ENCODE measurements at regions of chr14 and their contacts with region 1.

Region 1: DNA sequence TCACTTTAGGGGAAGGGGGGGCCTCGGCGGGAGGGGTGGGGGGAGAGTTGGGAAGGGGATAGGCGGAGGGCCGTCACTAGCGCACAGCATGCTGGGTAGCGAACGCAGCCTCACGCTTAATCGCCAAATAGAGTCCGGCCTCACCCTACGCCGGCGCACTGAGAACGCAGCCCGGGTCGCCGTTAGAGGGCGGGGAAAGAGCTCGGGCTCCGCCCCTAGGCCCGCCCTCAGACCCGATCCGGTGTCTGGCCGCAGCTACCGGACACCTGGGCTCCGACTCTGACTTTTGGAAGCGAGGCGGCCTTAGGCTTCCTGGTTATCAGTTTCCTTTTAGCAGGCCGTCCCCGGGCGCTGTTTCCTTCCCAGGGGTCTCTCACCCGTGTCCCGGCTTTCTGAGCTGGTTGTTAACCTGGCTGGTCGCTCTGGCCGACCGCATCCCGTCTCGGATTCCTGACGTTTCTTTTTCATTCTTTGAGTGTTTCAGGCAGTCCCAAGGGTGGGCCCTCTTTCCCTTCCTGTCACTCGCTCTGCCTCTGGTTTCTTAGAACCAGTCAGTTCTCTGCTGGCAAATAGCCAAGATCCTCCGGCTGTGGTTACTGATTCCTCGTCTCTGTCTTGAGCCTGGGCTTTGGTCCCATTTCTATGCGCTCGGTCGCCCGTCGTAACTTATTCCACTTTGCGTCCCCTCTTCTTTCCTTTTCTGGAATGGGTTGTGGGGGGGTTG is 378 bp upstream of the STRN3 start:
- DNase-seq: peak; percentile 97
- ATAC-seq: peak; percentile 96
- H3K4me3 ChIP-seq: peak overlapping the region; percentile 97
- H3K27ac ChIP-seq: peak overlapping the region; percentile 99
- H3K4me1 ChIP-seq: no peaks in the 10 kb centered on the region
- H3K27me3 ChIP-seq: no peaks in the 10 kb centered on the region
- CTCF ChIP-seq: no peak
- POLR2A ChIP-seq: peak; percentile 67
- RAD21 ChIP-seq: peak; percentile 10; the same call in 1 of the 2 replicates

Region 2: GRCh38 chr14:31059152-31059924 is 32.8 kb after region 1 on chr14:
- CTCF ChIA-PET with region 1: no interaction called
- POLR2A ChIA-PET with region 1: interaction called, 10 read pairs
- dilution Hi-C with region 1: no loop called
- in situ Hi-C with region 1: no loop called
- intact Hi-C with region 1: loop called (anchors 2 kb)
- DNase-seq: peak; percentile 87
- ATAC-seq: peak; percentile 93
- H3K4me3 ChIP-seq: no peak overlapping the region
- H3K27ac ChIP-seq: no peak overlapping the region
- H3K4me1 ChIP-seq: peaks cover 6% of the 10 kb centered on the region
- H3K27me3 ChIP-seq: no peaks in the 10 kb centered on the region
- CTCF ChIP-seq: no peak
- POLR2A ChIP-seq: no peak
- RAD21 ChIP-seq: no peak

Region 3: DNA sequence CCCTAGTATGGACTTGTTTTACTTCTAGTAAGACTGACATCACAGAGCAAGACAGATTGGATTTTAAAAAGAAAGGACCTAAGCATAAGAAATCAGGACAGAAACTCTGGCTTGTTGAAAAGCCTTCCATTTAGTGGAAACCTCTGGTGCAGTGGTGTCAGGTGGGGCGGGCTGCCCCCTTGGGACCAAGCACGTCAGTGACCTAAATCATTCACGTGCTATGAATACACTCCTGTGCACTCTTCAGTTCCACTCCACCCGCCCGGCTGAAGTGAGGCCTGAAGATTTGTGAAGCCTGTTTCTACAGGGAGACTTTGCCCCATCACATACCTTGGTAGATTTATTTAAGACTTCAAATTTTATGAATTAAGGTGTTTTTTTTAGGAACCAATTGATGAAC is 57.8 kb after region 1 on chr14:
- CTCF ChIA-PET with region 1: no interaction called
- POLR2A ChIA-PET with region 1: no interaction called
- dilution Hi-C with region 1: no loop called
- in situ Hi-C with region 1: no loop called
- intact Hi-C with region 1: loop called (anchors 1 kb)
- DNase-seq: no peak
- ATAC-seq: no peak
- H3K4me3 ChIP-seq: no peak overlapping the region
- H3K27ac ChIP-seq: no peak overlapping the region
- H3K4me1 ChIP-seq: no peaks in the 10 kb centered on the region
- H3K27me3 ChIP-seq: no peaks in the 10 kb centered on the region
- CTCF ChIP-seq: no peak
- POLR2A ChIP-seq: no peak
- RAD21 ChIP-seq: no peak

Region 4: DNA sequence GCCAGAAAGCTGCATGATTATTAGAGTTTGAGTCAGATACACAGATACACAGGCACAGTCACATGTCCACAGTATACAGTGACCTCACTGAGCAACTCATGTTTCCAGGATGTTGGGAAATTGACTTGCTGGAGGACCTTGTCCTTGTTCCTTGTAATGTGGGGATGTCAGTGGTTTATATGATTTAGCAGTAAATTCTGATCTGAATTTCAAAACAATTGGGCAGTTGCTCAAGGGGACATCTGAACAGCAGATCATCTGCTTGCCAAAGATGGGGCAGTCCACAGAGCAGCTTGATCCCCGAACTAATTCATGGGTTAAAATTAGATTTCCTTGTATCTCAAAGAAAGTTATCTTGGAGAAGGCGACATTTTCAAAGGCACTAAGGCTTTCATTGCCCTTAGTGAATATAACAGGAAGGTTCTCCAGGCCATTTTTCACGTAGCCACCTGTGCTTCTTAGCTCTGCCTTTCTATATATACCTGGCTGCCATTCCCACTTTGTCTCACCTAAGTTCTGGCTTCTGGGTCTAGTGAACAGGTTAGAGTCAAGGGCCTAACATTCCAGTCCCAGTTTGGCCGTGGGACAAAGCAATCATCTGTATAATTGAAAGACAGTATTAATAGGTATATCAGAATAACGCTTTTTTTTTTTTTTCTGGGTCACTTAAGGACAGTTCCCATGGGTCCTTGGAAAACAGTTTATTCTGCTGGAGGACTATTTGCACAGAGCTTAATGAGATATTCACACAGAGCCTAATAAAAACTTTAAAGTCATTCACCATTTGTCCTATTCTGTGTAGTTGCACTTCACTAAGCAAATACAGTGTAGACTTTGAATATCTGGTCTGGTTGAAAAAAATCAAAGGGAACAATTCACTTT is 64.6 kb after region 1 on chr14:
- CTCF ChIA-PET with region 1: no interaction called
- POLR2A ChIA-PET with region 1: interaction called, 5 read pairs
- dilution Hi-C with region 1: no loop called
- in situ Hi-C with region 1: no loop called
- intact Hi-C with region 1: loop called (anchors 2 kb)
- DNase-seq: peak; percentile 97
- ATAC-seq: peak; percentile 93
- H3K4me3 ChIP-seq: no peak overlapping the region
- H3K27ac ChIP-seq: peak overlapping the region; percentile 88; the same call in 1 of the 2 replicates
- H3K4me1 ChIP-seq: peaks cover 20% of the 10 kb centered on the region
- H3K27me3 ChIP-seq: no peaks in the 10 kb centered on the region
- CTCF ChIP-seq: no peak
- POLR2A ChIP-seq: no peak
- RAD21 ChIP-seq: peak; percentile 2; the same call in 1 of the 2 replicates